ENCODE measurements at regions of chr12 and their contacts with region 1.

Region 1: DNA sequence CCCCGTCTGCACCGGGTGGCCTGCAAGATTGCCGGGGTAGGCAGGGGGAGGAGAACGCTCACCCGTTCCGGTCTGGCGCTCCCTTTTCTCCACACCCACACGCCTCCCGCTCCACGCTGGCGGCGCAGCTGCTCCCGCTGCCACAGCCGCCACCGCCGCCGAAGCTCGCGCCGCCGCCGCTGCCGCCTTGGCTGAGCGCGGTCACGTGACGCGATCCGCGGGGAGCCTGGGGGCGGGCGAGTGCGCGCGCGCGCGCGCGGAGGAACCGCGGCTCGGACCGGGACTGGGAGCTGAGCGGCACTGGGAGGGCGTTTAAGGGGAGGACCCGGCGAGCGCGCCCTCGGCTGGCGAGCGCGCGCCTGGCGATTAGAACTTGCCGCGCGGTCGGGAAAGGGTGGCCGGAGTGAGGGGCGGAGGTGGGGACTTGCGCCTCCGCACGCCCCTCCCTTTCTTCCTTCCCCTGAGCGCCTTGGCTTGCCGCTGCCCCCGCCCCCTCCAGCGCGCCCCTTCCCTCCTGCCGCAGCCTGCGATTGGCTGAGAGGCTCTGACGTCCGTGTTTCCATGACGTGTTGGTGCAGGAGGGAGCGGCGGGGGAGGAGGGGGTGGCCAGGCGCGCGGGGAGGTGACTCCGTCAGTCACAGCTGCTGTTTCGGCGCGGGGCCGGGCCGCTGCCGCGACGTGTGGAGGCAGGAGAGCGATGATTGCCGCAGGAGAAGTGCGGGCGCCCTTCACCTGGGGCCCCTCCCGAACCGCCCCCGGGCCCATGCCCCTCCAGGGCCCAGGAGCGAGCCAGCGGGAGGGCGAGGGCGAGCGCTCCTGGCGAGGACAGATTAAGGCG is 738 bp upstream of the ATP2B1 start:
- DNase-seq: peak; percentile 96 to 98 (median 98)
- ATAC-seq: peak; percentile 89
- H3K4me3 ChIP-seq: peak overlapping the region; percentile 75
- H3K27ac ChIP-seq: peak overlapping the region; percentile 94
- H3K4me1 ChIP-seq: peaks cover 12 to 26% of the 10 kb centered on the region in 2 experiments; a peak in 4 of 5 replicates
- H3K27me3 ChIP-seq: no peaks in the 10 kb centered on the region
- CTCF ChIP-seq: 0 out of 6 replicates have a peak, but pooled peaks of 1 of the 3 experiments have one; percentile 4
- EP300 ChIP-seq: peak; percentile 21; the same call in 1 of the 2 replicates
- POLR2A ChIP-seq: peak; percentile 70
- RAD21 ChIP-seq: no peak; a peak in 2 of 4 replicates

Region 2: DNA sequence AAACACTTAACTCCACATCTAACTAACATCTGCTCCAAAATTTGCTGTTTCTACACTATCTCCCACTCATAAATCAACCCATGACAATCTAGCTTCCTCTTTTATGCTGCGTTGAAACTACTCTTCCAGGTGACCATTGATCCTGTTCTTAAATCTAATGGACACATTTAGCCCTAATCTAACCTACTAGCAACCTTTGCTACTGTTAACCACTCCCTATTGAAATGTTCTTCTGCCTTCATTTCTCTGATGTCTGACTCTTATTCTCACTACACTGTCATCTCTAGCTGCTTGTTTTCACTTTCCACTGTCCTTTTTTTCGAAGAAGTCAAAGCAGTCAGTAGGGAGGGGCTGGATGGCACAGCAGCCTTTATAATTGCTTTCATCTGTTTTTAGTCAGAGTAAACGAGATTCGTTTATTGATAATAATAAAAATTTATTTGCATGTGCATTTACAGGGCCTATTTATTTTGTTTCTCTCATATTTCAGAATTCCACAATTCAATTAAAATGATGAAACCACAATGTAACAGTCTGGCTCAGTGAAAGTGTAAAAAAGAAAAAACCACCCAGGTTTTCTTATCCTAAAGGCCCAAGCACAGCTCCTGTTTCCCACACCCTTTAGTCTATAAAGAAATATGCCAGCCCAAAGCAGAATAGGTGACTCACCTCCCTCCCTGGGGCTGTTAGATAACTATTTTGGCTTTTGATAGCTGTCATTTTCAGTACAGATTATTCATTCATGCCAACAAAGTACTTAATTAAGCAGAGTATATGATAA is 45.6 kb before region 1 on chr12:
- CTCF ChIA-PET with region 1: no interaction called
- POLR2A ChIA-PET with region 1: interaction called, 4 read pairs
- in situ Hi-C with region 1: no loop called
- intact Hi-C with region 1: loop called (anchors 2 kb)
- DNase-seq: peak; percentile 40 to 68 (median 50)
- ATAC-seq: peak; percentile 85
- H3K4me3 ChIP-seq: no peak overlapping the region
- H3K27ac ChIP-seq: peak overlapping the region; percentile 72
- H3K4me1 ChIP-seq: peaks cover 0 to 31% of the 10 kb centered on the region in 2 experiments; a peak in 4 of 5 replicates
- H3K27me3 ChIP-seq: no peaks in the 10 kb centered on the region
- CTCF ChIP-seq: no peak
- EP300 ChIP-seq: peak; percentile 80
- POLR2A ChIP-seq: no peak
- RAD21 ChIP-seq: 0 out of 4 replicates have a peak, but pooled peaks of 1 of the 2 experiments have one; percentile 17

Region 3: DNA sequence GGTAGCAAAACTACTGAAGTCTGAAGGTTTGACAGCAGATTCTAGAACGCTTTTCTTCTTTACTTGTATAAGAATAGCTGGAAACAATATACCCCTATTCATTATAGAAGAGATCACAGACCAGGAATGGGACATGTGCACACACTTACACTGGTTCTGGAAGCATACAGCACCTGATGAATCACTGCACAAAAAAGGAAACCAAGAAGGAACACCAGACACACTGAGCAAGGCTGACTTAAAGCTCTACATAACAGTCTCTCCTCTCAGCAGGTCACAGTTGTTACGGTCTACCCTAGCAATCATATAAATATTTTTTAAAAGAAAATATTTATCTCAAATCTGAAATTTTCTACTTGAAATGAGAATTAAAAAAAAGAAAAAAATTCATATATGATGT is 14.3 kb before region 1 on chr12:
- CTCF ChIA-PET with region 1: no interaction called
- POLR2A ChIA-PET with region 1: interaction called, 18 read pairs
- in situ Hi-C with region 1: no loop called
- intact Hi-C with region 1: no loop called
- DNase-seq: no peak
- ATAC-seq: peak; percentile 34
- H3K4me3 ChIP-seq: no peak overlapping the region
- H3K27ac ChIP-seq: no peak overlapping the region
- H3K4me1 ChIP-seq: peaks cover 0 to 21% of the 10 kb centered on the region in 2 experiments; a peak in 3 of 5 replicates
- H3K27me3 ChIP-seq: no peaks in the 10 kb centered on the region
- CTCF ChIP-seq: no peak
- EP300 ChIP-seq: no peak
- POLR2A ChIP-seq: no peak
- RAD21 ChIP-seq: no peak

Region 4: DNA sequence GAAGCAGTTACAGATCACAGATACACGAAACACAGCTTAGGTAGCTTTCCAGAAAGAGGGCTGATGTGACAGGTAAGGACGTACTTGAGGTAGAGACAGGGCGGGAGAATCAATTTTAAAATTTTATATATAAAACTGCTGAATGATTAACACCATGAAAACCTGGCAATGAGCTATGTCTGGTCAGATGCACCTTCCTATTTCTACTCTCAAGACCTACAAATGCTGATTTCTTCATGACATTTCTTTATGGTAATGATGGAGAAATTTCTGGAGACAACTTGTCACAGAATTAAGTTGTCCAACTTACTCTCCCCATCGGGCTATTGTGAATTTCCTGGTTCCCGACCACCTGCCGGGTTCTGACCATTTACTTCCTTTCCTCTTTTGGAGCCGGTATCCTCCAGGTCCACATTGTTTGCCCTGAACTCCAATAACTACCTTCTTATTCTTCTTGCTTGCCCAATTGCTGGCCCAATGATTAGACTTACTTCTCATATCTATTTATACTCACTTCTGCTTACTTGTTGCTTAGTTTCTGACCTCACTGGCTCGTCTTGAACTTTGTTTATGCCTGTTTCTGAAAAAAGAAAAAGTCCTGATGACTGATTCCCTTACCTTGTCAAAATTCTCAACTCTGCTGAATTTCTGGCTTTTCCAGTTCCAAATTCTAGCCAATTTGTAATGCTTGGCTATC is 12.1 kb after region 1 on chr12:
- CTCF ChIA-PET with region 1: no interaction called
- POLR2A ChIA-PET with region 1: interaction called, 11 read pairs
- in situ Hi-C with region 1: no loop called
- intact Hi-C with region 1: no loop called
- DNase-seq: no peak
- ATAC-seq: no peak
- H3K4me3 ChIP-seq: no peak overlapping the region
- H3K27ac ChIP-seq: no peak overlapping the region
- H3K4me1 ChIP-seq: no peaks in the 10 kb centered on the region
- H3K27me3 ChIP-seq: no peaks in the 10 kb centered on the region
- CTCF ChIP-seq: no peak
- EP300 ChIP-seq: no peak
- POLR2A ChIP-seq: no peak
- RAD21 ChIP-seq: no peak